PC-9 (cell line): ENCODE measurements at regions of chr18 and their contacts with region 1.

Region 1: DNA sequence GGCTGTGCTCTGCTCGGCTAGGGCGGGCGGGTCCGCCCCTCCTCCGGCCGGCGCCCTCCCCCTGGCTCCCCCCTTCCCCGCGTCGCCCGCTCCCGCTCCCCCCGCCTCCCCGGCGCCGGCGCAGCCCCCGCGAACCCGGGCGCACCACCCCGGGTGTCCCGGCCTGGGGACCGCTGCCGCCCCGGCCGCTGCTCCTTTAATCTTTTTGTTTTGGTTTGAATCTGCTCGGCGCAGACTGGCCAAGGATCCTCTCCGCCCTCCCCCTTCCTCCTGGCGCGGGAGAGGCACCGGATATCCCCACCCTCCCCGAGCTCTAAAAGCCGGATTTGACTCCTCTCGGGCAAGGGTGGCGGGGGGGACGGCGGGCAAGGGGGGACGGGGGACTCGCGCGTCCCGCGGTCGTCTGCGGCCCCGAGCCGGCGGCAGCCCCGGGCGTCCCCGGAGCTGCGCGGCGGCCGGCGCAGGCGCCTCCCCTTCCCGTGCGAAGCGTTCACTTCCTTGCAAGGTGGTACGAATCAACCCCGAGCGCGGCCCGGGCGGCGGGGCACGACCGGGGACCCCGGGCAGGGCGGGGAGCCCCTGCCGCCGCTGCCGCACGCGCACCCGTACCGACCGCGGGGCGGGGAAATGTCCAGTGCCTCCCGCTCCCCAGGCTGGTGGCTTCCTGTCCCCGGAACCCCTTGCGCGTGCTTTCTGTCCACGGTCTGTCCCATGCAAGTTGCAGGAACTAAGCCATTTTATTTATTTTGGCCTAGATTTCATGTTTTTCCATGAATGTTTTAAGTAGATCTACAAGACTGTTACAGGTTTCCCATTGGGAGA is at the start of gene PTGR3:
- DNase-seq: peak; percentile 76 to 80
- H3K4me3 ChIP-seq: peak within 1 kb of the TSS; percentile 90
- H3K27ac ChIP-seq: peak within 1 kb of the TSS; percentile 77
- H3K4me1 ChIP-seq: peaks cover 43% of the 10 kb centered on the region
- H3K27me3 ChIP-seq: no peaks in the 10 kb centered on the region
- CTCF ChIP-seq: no peak
- total RNA-seq, gene PTGR3: 36.6 and 38.4 TPM in 2 replicates

Region 2: DNA sequence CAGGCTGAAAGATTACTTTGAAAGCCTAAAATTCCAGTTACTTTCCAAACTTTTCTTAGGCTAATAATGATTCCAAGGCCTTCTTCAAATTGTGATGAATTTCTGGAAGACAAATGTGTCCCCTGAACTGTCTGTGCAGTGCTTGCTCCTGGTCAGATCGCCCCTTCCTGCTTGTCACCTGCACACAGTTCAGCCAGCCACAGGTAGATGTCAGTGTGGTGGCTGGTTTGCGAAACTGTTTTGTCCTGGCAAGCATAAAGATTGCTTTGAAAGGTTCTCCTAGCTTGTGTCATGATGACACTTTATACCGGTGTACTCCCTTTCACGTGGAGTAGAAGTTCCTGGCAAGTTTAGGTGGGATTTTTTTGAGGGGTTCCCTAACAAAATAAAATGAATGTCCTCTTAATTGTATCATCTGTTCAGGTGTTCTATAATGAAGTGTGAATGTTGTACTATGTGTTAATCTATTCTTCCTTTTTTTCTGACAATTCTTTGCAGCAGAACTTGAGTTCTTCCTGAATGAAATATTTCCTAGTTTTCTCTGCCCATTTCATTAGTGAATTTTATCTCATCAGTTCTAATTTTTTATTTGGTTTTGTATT is 312.8 kb before region 1 on chr18:
- CTCF ChIA-PET with region 1: no interaction called
- POLR2A ChIA-PET with region 1: no interaction called
- intact Hi-C with region 1: loop called (anchors 1 kb)
- DNase-seq: peak; percentile 52 to 54
- H3K4me3 ChIP-seq: no peak overlapping the region
- H3K27ac ChIP-seq: no peak overlapping the region
- H3K4me1 ChIP-seq: no peaks in the 10 kb centered on the region
- H3K27me3 ChIP-seq: no peaks in the 10 kb centered on the region
- CTCF ChIP-seq: peak; percentile 76

Region 3: GRCh38 chr18:74942319-74942910 is 266.9 kb before region 1 on chr18:
- CTCF ChIA-PET with region 1: no interaction called
- POLR2A ChIA-PET with region 1: interaction called, 14 read pairs
- intact Hi-C with region 1: no loop called
- DNase-seq: no peak
- H3K4me3 ChIP-seq: no peak overlapping the region
- H3K27ac ChIP-seq: no peak overlapping the region
- H3K4me1 ChIP-seq: peaks cover 10% of the 10 kb centered on the region; the same call in 1 of the 2 replicates
- H3K27me3 ChIP-seq: no peaks in the 10 kb centered on the region
- CTCF ChIP-seq: no peak

Region 4: DNA sequence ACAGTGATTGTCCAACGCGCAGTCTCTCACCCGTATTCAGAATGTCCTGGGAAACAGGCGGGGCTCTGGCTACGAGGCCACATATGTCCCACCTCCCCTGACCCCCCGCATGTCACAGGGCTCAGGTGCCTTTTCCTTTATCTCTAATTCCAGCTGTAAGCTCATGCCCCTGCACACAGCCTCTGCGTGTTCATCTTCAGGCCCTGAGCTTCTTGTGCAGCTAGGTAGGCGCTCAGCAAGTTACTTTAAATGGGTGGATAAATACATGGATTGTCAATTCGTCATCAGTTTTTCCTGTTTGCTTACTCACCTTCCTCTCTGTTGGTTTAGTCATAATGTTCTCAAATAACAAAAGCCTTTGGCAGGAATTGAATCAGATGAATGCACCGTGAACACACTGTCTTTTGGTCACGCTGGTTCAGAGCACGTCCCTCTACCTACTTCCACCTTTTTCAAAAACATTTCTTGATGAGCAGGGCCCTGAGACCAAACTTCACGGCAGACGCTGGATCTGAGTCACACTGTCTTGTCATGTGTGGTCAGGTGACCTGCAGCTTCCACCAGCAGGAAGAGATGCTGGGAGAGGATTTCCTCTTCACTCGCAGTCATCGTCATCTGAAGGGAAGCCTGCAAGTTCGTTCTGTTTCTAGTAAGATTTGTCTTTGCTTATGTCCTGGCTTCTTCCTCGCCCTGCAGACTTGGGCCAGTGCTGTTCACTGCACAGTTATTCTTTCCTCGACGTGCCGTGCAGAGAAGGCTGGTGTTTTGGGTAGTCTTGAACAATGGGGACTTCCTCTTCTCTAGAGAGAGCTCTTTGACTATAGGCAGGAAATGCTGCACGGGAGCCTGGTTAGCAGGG is 138.5 kb before region 1 on chr18:
- CTCF ChIA-PET with region 1: no interaction called
- POLR2A ChIA-PET with region 1: interaction called, 9 read pairs
- intact Hi-C with region 1: loop called (anchors 2 kb)
- DNase-seq: peak; percentile 47 to 93
- H3K4me3 ChIP-seq: peak overlapping the region; percentile 25; the same call in 1 of the 2 replicates
- H3K27ac ChIP-seq: peak overlapping the region; percentile 44
- H3K4me1 ChIP-seq: peaks cover 20% of the 10 kb centered on the region
- H3K27me3 ChIP-seq: no peaks in the 10 kb centered on the region
- CTCF ChIP-seq: no peak

Region 5: GRCh38 chr18:75183531-75183930 is 25.8 kb before region 1 on chr18:
- CTCF ChIA-PET with region 1: no interaction called
- POLR2A ChIA-PET with region 1: no interaction called
- intact Hi-C with region 1: loop called (anchors 1 kb)
- DNase-seq: peak; percentile 61 to 96
- H3K4me3 ChIP-seq: no peak overlapping the region
- H3K27ac ChIP-seq: 0 out of 2 replicates have a peak overlapping the region, but pooled peaks have one; percentile 5
- H3K4me1 ChIP-seq: peaks cover 18% of the 10 kb centered on the region
- H3K27me3 ChIP-seq: no peaks in the 10 kb centered on the region
- CTCF ChIP-seq: no peak

Region 6: GRCh38 chr18:75220551-75221355 is 11.4 kb after region 1 on chr18:
- CTCF ChIA-PET with region 1: no interaction called
- POLR2A ChIA-PET with region 1: interaction called, 10 read pairs
- intact Hi-C with region 1: no loop called
- DNase-seq: no peak
- H3K4me3 ChIP-seq: no peak overlapping the region
- H3K27ac ChIP-seq: no peak overlapping the region
- H3K4me1 ChIP-seq: no peaks in the 10 kb centered on the region
- H3K27me3 ChIP-seq: no peaks in the 10 kb centered on the region
- CTCF ChIP-seq: no peak

Region 7: GRCh38 chr18:76660571-76661192 is 1451.3 kb after region 1 on chr18:
- CTCF ChIA-PET with region 1: no interaction called
- POLR2A ChIA-PET with region 1: no interaction called
- intact Hi-C with region 1: no loop called
- DNase-seq: no peak
- H3K4me3 ChIP-seq: no peak overlapping the region
- H3K27ac ChIP-seq: no peak overlapping the region
- H3K4me1 ChIP-seq: no peaks in the 10 kb centered on the region
- H3K27me3 ChIP-seq: peaks cover 48% of the 10 kb centered on the region
- CTCF ChIP-seq: no peak